Ascending aorta (tissue), 2 donors: ENCODE measurements at regions of chr4 and their contacts with region 1.

Region 1: GRCh38 chr4:55395529-55396307 is at the start of gene TMEM165:
- DNase-seq: peak; percentile 71 to 95
- H3K4me3 ChIP-seq: peak within 1 kb of the TSS; percentile 97 to 98
- H3K27ac ChIP-seq: peak within 1 kb of the TSS; percentile 99 to 100
- H3K4me1 ChIP-seq: peaks cover 0 to 9% of the 10 kb centered on the region in 2 donors
- H3K27me3 ChIP-seq: no peaks in the 10 kb centered on the region
- CTCF ChIP-seq: no peak
- total RNA-seq, gene TMEM165: 178 TPM

Region 2: DNA sequence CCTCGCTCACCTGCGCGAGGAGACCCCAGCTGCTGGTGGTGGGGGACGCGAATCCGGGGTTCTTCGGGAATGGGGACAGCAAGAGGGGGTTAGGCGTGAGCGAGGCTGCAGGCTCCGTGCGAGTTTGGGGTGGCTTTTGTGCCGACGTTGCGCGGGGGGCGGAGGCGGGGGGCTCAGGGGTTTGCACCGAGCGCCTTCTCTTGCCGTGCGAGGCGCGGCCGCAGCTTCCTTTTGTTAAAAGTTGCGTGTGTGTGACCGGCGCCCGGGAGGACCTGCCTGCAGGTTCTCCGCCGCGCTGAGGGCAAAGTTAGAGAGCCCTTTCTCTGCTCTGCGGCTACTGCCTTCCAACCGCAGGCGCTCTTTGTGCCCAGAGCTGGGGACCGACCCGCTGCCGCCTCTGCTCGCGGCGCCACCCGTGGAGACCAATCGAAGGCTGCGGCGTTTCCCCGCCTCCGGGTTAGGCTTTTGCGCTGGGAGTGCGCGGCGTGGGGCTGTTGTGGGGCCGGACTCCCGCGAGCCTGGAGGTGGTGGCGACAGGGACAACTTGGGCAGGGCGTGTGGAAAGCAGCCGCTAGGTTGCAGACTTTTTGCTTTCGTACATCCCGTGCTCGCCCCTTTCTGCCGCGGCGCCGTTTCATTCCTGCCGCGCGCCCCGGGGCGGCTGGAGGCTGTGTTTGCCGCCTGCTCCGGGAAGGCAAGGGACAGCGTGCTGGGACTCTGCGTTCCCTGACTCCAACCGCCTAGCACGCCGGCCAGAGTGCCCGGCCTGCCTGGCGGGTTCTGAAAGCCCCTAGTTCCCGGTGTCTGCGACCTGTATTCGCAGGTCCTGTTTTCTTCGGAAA is 737.2 kb before region 1 on chr4:
- intact Hi-C with region 1: loop called (anchors 10 kb)
- DNase-seq: peak in 1 of 2 donors; percentile 71
- H3K4me3 ChIP-seq: peak overlapping the region; percentile 74 to 80
- H3K27ac ChIP-seq: peak overlapping the region; percentile 1 to 13
- H3K4me1 ChIP-seq: peaks cover 6 to 24% of the 10 kb centered on the region in 2 donors
- H3K27me3 ChIP-seq: no peaks in the 10 kb centered on the region
- CTCF ChIP-seq: peak in 1 of 3 experiments; percentile 47

Region 3: GRCh38 chr4:55345980-55346850 is 49.5 kb before region 1 on chr4 and contains the start of gene SRD5A3:
- intact Hi-C with region 1: loop called (anchors 1 kb)
- DNase-seq: peak; percentile 48 to 91
- H3K4me3 ChIP-seq: peak within 1 kb of the TSS; percentile 73 to 90
- H3K27ac ChIP-seq: peak within 1 kb of the TSS; percentile 95 to 98
- H3K4me1 ChIP-seq: peaks cover 4 to 6% of the 10 kb centered on the region in 2 donors
- H3K27me3 ChIP-seq: no peaks in the 10 kb centered on the region
- CTCF ChIP-seq: peak; percentile 79 to 91 (median 88)
- total RNA-seq, gene SRD5A3: 6.8 TPM

Region 4: GRCh38 chr4:55546756-55547465 is 151.2 kb after region 1 on chr4 and contains the start of gene CLOCK:
- intact Hi-C with region 1: loop called (anchors 2 kb)
- DNase-seq: peak; percentile 39 to 91
- H3K4me3 ChIP-seq: peak within 1 kb of the TSS; percentile 87 to 91
- H3K27ac ChIP-seq: peak within 1 kb of the TSS; percentile 96 to 97
- H3K4me1 ChIP-seq: peaks cover 0 to 18% of the 10 kb centered on the region in 2 donors
- H3K27me3 ChIP-seq: no peaks in the 10 kb centered on the region
- CTCF ChIP-seq: peak; percentile 39 to 58 (median 57)
- total RNA-seq, gene CLOCK: 17.6 TPM

Region 5: DNA sequence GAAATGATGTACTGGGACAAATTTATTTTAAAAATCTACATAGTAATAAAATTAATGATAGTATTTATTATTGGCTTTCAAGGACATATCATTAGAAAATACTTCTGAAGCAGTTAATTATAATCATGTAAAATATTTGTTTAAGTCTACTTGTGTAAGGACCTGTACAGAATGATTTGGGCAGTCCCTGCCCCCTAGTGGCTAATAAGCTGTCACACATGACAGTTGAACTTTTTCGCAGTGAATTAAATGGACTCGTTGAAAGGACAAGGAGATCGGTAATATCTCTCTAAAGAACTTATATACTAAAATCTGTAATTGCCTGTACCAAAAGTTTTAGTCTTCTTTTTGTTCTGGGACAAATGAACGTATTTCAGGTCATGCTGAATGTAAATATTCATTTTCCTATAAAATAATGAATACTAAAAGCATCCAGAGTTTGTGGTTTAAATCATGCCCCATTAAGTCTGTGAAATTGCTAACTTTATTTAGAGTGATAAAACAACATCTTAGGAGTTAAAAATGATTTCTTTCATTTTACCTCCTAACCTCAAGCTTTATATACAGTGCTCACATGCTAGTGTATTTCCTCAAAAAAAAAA is 471.4 kb after region 1 on chr4:
- intact Hi-C with region 1: loop called (anchors 5 kb)
- DNase-seq: no peak
- H3K4me3 ChIP-seq: peak overlapping the region in 1 of 2 donors; percentile 14
- H3K27ac ChIP-seq: peak overlapping the region; percentile 77
- H3K4me1 ChIP-seq: peaks cover 2 to 11% of the 10 kb centered on the region in 2 donors
- H3K27me3 ChIP-seq: no peaks in the 10 kb centered on the region
- CTCF ChIP-seq: peak; percentile 29 to 70 (median 59)

Region 6: GRCh38 chr4:56435306-56435926 is 1039.7 kb after region 1 on chr4 and contains the start of gene PPAT:
- intact Hi-C with region 1: loop called (anchors 5 kb)
- DNase-seq: peak; percentile 92 to 98
- H3K4me3 ChIP-seq: peak within 1 kb of the TSS; percentile 70 to 86
- H3K27ac ChIP-seq: peak within 1 kb of the TSS; percentile 84 to 88
- H3K4me1 ChIP-seq: peaks cover 0 to 7% of the 10 kb centered on the region in 2 donors
- H3K27me3 ChIP-seq: no peaks in the 10 kb centered on the region
- CTCF ChIP-seq: peak in 1 of 3 experiments; percentile 35
- total RNA-seq, gene PPAT: 3.6 TPM

Region 7: DNA sequence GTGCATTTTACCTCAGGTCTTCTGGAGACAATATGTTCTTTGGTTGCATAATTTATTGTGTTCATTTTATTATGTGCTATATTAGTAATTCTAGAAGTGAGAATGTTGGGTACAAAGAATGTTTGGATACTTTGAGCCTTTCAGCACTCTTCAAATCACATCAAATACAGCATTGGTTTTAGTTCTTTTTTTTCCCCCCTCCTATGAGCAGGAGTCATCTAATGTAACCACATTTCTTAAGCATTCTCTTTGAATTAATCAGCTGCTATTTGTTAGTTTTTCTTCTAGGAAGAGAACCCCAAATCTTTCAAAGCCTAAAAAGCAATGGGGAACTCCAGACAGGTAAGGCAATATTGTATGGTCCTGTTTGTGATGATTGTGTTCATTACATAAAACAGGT is 1156.6 kb after region 1 on chr4:
- intact Hi-C with region 1: no loop called
- DNase-seq: no peak
- H3K4me3 ChIP-seq: no peak overlapping the region
- H3K27ac ChIP-seq: no peak overlapping the region
- H3K4me1 ChIP-seq: no peaks in the 10 kb centered on the region
- H3K27me3 ChIP-seq: no peaks in the 10 kb centered on the region
- CTCF ChIP-seq: no peak